ENCODE measurements at regions of chr6 and their contacts with region 1.

Region 1: DNA sequence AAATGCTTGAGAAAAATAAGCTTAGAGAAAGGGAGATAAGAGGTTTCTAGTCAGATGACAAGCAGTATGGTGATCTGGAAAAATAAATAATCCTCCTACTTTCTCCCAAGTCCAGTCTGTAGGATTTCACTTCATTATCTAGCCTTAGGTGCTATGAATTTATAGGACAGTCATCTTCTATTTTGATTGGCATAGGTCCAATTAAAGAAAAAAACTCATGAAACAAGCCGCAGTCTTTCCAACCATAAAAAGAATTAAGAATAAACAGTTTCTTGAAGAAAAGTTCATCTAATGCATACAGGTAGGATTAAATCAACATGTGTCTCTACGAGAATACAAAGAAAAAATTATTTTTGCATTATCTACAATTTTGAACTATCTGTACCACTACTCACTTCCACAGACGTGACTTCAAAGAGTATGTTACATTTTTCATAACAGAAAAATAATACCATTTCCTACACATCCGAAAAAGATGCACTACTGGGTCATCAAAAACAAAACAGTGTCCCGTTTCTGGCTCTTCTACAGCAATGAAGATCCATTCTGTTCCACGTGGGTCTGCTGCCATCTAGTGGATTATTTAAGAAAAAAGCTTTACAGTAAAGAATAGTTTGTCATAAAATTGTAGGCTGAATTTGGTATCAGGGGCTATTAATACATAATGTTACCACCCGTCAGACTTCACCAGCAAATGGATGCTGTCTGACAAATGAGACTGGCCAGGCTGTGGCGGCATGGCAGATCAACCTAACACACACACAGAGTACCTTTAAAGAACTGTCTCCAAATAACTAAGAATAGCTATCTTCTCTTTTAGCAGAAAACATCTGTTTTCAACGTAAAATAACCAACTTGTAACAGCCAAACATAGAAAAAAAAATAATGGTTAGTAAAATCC is 28.9 kb downstream of the STX7 start:
- DNase-seq: peak in 1 of 10 donors; percentile 55
- H3K4me3 ChIP-seq: peak overlapping the region in 24 of 59 donors; percentile 0 to 47 (median 32)
- H3K27ac ChIP-seq: peak overlapping the region in 7 of 59 donors; percentile 1 to 41 (median 36)
- H3K27me3 ChIP-seq: no peaks in the 10 kb centered on the region
- CTCF ChIP-seq: peak; percentile 71 to 95 (median 86)

Region 2: DNA sequence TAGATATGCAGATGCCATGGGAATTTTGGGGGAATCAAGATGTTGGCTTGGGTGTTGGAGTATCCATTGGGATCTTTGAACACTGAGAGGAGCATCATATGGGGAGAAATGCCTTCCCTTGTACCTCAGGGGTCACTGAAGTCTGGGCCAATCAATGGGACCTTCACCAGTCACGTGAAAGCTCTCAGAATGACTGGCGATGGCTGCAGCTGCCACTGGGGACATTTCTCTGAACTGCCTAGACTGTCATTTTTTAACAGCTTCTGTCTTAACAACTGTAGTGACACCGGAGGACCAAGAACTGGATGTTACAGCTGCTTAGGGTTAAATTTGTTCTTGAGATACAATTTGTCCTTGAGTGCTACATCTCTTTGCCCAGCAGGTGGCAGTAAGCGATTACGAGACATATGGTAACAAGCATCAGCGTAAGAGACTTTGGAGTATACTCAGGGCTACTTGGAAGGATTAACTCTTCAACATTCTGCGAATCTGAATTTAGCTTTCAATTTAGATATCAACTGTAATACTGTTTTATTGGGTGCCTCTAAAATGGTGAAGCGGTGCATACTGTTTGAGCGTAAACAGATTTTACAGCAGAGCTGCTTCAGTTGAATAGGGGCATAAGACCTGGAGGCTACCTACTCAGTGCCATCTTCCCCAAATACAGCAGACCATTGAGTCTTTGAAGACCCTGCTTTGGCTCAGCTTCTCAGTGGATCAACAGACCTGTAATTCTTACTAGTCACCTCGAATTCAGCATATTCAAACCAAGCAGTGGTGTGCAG is 568.9 kb before region 1 on chr6:
- intact Hi-C with region 1: loop called in 1 of 2 experiments (anchors 5 kb)
- DNase-seq: peak in 8 of 10 donors; percentile 11 to 82 (median 56)
- H3K4me3 ChIP-seq: peak overlapping the region in 20 of 59 donors; percentile 5 to 42 (median 20)
- H3K27ac ChIP-seq: no peak overlapping the region
- H3K27me3 ChIP-seq: peaks cover 0 to 9% (median 0%) of the 10 kb centered on the region in 45 donors
- CTCF ChIP-seq: peak; percentile 65 to 92 (median 85)

Region 3: DNA sequence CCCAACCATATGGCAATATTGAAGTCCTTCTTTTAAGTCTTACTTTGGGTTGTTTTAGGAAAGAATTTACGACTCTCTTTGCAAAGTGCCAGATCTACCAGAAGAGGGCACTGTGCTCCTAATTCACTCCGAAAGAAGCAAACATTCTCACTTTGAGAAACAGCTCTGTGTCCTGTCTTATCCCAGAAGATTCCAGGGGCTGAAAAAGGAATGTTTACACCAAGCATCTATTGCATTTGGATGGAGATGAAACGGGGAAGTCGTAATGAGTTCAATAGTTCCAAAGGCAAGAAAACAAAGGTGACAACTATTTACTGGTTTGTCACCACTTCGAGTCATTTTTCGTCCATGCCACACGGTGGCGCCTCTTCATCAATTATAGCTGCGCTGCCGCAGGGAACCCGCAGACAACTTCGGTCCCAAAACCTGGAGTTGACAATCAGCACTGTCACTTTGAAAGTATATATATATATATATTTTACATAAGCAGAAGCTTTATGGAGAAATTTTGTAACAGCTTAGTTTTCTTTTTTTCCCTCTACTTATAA is 204.4 kb before region 1 on chr6:
- intact Hi-C with region 1: loop called (anchors 1 to 2 kb)
- DNase-seq: peak; percentile 71 to 86 (median 81)
- H3K4me3 ChIP-seq: peak overlapping the region; percentile 13 to 69 (median 51)
- H3K27ac ChIP-seq: peak overlapping the region in 38 of 59 donors; percentile 3 to 86 (median 68)
- H3K27me3 ChIP-seq: peaks cover 0 to 8% (median 0%) of the 10 kb centered on the region in 45 donors
- CTCF ChIP-seq: peak in 55 of 56 donors; percentile 79 to 100 (median 97)

Region 4: DNA sequence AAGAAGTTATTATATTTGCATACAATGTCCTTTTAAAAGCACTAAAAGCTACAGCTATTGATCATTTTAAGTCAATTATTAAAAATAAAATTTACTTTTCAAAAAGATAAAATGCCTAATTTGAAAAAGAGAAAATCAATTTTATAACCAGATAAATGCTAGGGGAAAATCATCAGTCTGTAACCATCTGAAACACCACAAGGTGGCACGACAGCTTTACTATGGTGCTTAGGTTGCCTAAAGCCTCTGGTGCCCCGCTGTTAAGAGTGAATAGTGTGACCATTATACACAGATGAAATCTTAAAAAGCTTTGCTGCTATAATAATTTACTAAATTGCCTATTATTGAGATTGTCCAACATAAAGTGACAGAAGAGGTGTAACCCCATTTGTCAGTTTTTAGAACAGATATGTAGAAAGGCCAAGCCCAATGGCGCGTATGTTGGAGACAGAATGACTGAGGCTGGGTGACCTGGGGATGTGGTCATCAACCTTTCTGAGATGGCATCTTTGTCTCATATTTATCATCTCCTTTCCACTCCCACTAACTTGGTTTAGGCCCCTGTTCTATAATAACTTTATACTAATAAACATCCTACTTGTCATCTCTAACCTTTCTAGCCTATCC is 183.6 kb before region 1 on chr6:
- intact Hi-C with region 1: loop called (anchors 2 to 5 kb)
- DNase-seq: peak in 4 of 10 donors; percentile 24 to 59 (median 53)
- H3K4me3 ChIP-seq: no peak overlapping the region
- H3K27ac ChIP-seq: peak overlapping the region in 1 of 59 donors; percentile 1
- H3K27me3 ChIP-seq: no peaks in the 10 kb centered on the region
- CTCF ChIP-seq: peak; percentile 44 to 90 (median 74)